Activated CD4-positive, alpha-beta memory T cell treated with anti-CD3 and anti-CD28 coated beads for 36 hours (primary cell): ENCODE measurements at regions of chr7 and their contacts with region 1.

Region 1: DNA sequence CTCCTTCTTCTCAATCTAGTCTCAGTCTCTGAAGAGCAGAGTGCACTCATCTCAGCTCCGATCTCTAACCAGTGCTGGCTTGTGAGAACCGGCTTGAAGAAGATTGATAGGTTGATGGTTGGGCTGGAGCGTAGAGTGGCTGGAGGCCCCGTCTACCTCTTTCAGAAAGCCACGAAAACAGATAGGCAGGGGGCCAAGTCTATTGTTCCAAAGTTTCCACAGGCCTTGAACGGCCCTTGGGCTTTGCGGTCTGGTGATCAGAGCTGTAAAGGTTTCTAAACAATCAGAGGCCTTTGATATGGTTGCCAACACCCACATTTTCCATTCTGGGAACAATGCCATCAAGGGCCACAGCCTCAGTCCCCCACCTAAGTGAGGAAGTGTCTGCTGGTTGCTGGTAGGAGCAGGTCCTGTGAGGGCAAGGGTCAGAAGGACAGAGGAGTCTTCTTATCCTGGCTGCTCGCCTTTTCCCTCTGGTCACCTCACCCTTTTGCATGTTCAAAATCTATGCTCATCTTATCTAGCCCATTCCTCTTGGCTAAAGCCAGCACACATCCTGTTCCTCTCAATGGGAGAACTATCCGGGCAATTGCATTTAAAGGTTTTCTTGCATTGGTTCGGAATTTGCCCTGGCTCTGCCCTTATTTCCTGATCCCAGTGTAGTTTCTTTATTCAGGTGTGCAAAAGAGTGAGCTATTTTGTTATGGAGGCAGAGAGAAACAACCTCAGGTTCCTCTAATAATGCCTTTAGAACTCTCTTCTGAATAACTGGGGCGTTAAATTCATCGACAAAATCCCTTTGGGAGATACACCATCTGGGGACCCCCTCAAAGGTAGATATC is 70.3 kb upstream of the KMT2E start:
- DNase-seq: peak; percentile 89
- H3K4me3 Mint-ChIP-seq: peak overlapping the region; percentile 89
- H3K27ac Mint-ChIP-seq: peak overlapping the region; percentile 98
- H3K4me1 Mint-ChIP-seq: peaks cover 62% of the 10 kb centered on the region
- H3K27me3 Mint-ChIP-seq: no peaks in the 10 kb centered on the region

Region 2: GRCh38 chr7:104694710-104695109 is 249.0 kb before region 1 on chr7:
- CTCF ChIA-PET with region 1: no interaction called
- POLR2A ChIA-PET with region 1: no interaction called
- intact Hi-C with region 1: no loop called
- DNase-seq: no peak
- H3K4me3 Mint-ChIP-seq: no peak overlapping the region
- H3K27ac Mint-ChIP-seq: no peak overlapping the region
- H3K4me1 Mint-ChIP-seq: no peaks in the 10 kb centered on the region
- H3K27me3 Mint-ChIP-seq: peaks cover 1% of the 10 kb centered on the region

Region 3: DNA sequence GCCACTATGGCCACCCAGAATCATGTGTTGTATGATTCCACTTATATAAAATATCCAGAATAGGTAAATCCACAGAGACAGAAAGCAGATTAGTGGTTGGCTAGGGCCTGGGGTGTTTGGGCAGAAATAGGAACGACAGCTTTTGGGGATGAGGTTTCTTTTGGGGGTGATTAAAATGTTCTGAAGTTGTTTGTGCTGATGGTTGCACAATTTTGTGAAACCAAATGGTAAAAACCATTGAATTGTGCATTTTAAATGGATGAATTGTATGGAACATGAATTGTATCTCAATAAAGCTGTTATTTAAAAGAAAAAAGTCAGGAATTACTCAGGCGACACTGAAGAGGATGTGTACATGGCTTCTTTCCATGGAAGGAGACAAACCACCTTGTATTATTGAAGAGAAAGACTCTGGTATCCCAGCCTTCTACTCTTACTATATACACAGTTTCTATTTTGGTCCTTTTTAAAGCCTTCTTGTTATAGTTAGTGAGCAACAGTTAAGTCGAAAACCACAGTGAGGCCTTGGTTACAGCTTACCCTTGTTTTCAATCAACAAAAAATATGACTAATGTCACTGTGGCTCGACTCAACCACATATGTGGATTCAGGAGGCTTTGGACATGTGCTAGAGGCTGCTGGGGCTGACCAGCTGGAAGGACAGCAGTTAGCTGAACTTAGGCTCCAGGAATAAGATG is 13.2 kb after region 1 on chr7:
- CTCF ChIA-PET with region 1: interaction called, 4 read pairs
- POLR2A ChIA-PET with region 1: interaction called, 78 read pairs
- intact Hi-C with region 1: loop called (anchors 1 kb)
- DNase-seq: peak; percentile 60
- H3K4me3 Mint-ChIP-seq: peak overlapping the region; percentile 33
- H3K27ac Mint-ChIP-seq: peak overlapping the region; percentile 94
- H3K4me1 Mint-ChIP-seq: peaks cover 47% of the 10 kb centered on the region
- H3K27me3 Mint-ChIP-seq: no peaks in the 10 kb centered on the region

Region 4: GRCh38 chr7:105032553-105033214 is 89.0 kb after region 1 on chr7:
- CTCF ChIA-PET with region 1: no interaction called
- POLR2A ChIA-PET with region 1: no interaction called
- intact Hi-C with region 1: no loop called
- DNase-seq: no peak
- H3K4me3 Mint-ChIP-seq: no peak overlapping the region
- H3K27ac Mint-ChIP-seq: no peak overlapping the region
- H3K4me1 Mint-ChIP-seq: peaks cover 65% of the 10 kb centered on the region
- H3K27me3 Mint-ChIP-seq: no peaks in the 10 kb centered on the region

Region 5: GRCh38 chr7:105098863-105099515 is 155.3 kb after region 1 on chr7:
- CTCF ChIA-PET with region 1: interaction called, 3 read pairs
- POLR2A ChIA-PET with region 1: no interaction called
- intact Hi-C with region 1: loop called (anchors 5 kb)
- DNase-seq: no peak
- H3K4me3 Mint-ChIP-seq: no peak overlapping the region
- H3K27ac Mint-ChIP-seq: peak overlapping the region; percentile 24
- H3K4me1 Mint-ChIP-seq: peaks cover 63% of the 10 kb centered on the region
- H3K27me3 Mint-ChIP-seq: no peaks in the 10 kb centered on the region

Region 6: DNA sequence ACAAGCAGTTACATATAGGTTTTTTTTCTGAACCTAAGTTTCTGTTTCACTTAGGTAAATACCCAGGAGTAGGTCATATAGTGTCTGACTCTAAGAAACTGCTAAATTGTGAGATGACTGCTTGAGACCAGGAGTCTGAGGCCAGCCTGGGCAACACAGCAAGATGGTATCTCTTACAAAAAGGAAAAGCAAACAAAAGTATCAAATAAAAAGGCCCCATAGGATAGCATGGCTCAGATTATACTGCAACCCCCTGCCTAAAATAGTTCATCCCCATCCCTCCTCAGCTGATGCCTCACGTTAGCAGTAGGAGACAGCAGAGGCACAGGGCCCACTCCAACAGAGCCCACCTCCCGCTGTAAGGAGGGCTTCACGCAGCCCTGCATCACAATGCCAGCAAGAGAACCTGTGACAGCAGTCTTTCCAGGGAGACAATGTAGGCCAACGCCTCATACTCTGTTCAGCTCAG is 354.8 kb after region 1 on chr7:
- CTCF ChIA-PET with region 1: no interaction called
- POLR2A ChIA-PET with region 1: no interaction called
- intact Hi-C with region 1: loop called (anchors 2 kb)
- DNase-seq: peak; percentile 69
- H3K4me3 Mint-ChIP-seq: peak overlapping the region; percentile 47
- H3K27ac Mint-ChIP-seq: peak overlapping the region; percentile 93
- H3K4me1 Mint-ChIP-seq: peaks cover 59% of the 10 kb centered on the region
- H3K27me3 Mint-ChIP-seq: no peaks in the 10 kb centered on the region

Region 7: GRCh38 chr7:105531792-105532671 is 588.3 kb after region 1 on chr7 and contains the start of gene RINT1:
- CTCF ChIA-PET with region 1: no interaction called
- POLR2A ChIA-PET with region 1: no interaction called
- intact Hi-C with region 1: loop called (anchors 5 kb)
- DNase-seq: peak; percentile 94
- H3K4me3 Mint-ChIP-seq: peak within 1 kb of the TSS; percentile 86
- H3K27ac Mint-ChIP-seq: peak within 1 kb of the TSS; percentile 88
- H3K4me1 Mint-ChIP-seq: peaks cover 22% of the 10 kb centered on the region
- H3K27me3 Mint-ChIP-seq: no peaks in the 10 kb centered on the region
- total RNA-seq, gene RINT1: 23.3 to 26.7 TPM

Region 8: GRCh38 chr7:105594034-105594433 is 650.3 kb after region 1 on chr7:
- CTCF ChIA-PET with region 1: no interaction called
- POLR2A ChIA-PET with region 1: no interaction called
- intact Hi-C with region 1: no loop called
- DNase-seq: no peak
- H3K4me3 Mint-ChIP-seq: no peak overlapping the region
- H3K27ac Mint-ChIP-seq: no peak overlapping the region
- H3K4me1 Mint-ChIP-seq: peaks cover 5% of the 10 kb centered on the region
- H3K27me3 Mint-ChIP-seq: no peaks in the 10 kb centered on the region

Region 9: DNA sequence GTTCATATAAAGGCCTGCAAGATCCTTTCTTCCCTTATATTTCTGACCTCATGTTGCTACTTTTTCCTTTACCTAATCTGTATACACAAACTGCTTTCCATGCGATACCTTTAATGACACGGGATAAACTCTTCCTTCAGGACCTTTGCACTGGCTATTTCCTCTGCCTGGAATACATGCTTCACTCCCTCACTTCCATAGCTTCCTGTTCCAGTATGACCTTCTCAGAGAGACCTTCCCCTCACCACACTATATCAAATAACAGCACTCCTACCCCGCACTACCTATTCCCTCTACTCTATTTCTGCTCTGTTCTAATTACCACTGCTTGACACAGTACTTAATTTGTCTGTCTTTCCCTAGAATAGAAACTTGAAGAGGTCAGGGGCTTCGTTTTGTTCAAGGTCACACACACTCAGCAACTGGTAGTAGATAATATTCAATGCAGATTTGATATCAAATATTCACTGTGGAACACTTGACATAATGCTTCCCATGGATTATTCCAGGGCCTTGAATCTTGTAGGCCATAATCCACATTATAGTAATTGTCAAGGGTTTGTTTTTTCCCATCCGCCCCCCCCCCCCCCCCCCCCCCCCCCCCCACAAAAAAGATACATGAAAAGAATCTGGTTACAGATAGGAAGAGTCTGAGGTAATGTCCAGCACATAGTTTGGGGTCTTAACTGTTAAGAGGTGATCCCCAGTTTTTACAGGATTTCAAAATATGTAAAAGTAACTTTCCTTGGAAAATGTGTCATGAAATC is 1157.3 kb after region 1 on chr7:
- CTCF ChIA-PET with region 1: no interaction called
- POLR2A ChIA-PET with region 1: no interaction called
- intact Hi-C with region 1: no loop called
- DNase-seq: no peak
- H3K4me3 Mint-ChIP-seq: no peak overlapping the region
- H3K27ac Mint-ChIP-seq: no peak overlapping the region
- H3K4me1 Mint-ChIP-seq: peaks cover 53% of the 10 kb centered on the region
- H3K27me3 Mint-ChIP-seq: no peaks in the 10 kb centered on the region